Left cardiac atrium (tissue), 4 donors: ENCODE measurements at regions of chr7 and their contacts with region 1.

Region 1: DNA sequence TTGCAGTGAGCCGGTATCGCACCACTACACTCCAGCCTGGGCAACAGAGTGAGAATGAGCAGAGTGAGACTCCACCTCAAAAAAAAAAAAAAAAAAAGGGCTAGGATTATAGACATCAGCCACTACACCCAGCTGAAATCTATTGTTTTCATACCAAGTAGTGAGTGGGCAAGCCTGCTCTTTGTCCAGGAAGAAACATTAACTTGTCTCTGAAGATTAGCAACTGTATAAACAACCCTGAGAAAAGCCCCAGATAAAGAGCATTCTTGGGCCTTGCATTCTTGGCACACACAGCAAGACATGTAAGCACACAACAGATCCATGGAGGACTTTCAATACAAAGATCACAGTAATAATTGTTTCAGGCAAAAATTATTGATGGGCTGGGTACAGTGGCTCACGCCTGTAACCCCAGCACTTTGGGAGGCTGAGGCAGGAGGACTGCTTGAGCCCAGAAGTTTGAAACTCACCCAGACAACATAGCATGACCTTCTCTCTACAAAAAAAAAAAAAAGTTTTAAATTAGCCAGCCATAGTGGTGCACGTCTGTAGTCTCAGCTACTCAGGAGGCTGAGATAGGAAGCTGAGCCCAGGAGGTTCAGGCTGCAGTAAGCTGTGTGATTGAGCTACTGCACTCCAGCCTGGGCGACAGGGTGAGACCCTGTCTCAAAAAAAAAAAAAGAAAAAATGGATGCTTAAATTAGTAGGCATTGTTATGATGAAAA is 4.4 kb downstream of the PSPH start:
- DNase-seq: no peak
- ATAC-seq: no peak

Region 2: DNA sequence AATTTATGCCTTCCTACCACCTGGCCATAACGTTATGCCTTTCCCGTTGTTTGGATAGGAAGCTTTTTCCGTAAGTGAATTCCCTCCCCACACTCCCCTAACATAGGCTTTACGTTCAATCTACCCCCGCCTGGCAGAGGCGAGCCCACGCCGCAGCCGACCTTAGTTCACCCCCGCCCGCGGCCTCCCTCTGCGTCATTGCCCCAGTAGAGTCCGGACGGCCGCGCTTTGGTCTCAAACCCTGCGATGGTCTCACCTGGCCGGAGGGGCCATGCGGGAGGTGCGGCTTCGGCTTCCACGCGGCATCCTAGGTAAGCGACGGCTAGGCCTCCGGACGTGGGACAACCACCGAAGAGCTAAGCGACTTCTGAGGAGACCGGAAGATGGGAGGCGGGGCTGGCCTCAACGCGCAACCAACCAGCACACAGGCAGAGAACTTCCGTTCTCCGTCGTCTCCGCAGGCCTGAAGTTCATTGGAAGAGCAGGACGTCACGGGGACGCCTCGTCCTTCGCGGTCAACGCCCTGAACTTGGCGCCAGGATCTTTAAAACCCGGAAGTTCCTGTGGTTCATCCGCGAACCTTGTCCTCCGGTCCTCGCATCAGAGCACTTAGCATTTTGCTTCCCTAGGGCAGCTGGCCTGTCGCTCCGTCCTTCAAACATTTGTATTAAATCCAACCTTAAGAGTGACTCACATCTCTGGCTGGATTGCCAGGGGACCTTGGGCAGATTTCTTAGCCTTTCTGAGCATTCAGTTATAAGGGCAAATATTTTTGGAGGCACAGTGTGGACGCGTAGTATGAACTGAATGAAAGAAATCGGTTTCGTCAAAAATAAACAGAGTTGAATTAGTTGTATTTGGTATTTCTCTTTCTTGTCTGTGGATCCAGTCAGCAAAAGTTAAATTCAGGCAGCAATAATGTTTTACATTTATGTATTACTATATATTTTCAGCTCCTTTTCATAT is 59.5 kb after region 1 on chr7 and contains the start of gene CHCHD2:
- intact Hi-C with region 1: loop called in 1 of 2 experiments (anchors 10 kb)
- DNase-seq: peak; percentile 99
- ATAC-seq: peak; percentile 100
- total RNA-seq, gene CHCHD2: 430 to 503 TPM

Region 3: DNA sequence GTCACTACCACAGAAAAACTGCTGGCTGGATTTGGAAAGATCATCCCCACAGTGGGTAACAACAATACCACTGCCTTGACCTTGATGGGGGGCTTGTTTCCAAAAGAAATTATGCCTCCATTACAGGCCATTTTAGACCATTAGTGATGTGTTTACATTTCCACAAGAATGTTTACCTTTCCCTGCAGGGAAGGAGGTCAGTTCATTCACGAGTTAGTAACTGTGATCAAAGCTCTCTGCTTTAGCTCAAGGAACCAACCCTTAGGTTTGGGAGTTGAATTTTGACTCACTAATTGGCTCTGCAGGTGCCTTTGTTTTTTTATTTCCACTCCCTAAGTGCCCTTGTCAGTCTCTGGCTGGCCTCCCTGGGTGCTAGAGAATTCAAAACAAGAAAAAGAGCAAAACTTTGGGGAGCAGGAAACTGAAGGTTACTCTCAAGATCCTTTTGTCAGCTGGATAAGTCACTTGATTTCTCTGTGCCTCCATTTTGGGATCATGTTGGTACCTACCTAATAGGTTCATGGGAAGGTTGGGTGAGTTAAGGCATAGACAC is 110.4 kb after region 1 on chr7:
- intact Hi-C with region 1: no loop called
- DNase-seq: no peak
- ATAC-seq: no peak

Region 4: DNA sequence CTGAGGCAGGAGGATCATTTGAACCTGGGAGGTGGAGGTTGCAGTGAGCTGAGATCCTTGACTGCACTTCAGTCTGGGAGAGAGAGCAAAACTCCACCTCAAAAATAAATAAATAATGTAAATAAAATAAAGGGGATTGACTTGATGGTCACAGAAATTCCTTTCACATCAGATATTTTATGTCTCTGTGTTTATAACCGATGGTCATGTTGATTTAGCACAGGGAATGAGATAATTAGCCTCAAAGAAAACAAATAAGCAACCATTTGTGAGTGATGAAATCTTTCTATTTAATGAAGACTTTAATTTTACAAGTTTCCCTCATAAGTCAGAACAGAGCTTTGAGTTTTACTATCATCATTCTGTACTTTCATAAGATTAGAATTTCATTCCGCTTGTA is 134.1 kb after region 1 on chr7:
- intact Hi-C with region 1: no loop called
- DNase-seq: no peak
- ATAC-seq: no peak